ENCODE measurements at regions of chr15 and their contacts with region 1.

Region 1: GRCh38 chr15:38699633-38700230 is 135.1 kb upstream of the RASGRP1 start:
- DNase-seq: peak in 3 of 5 donors; percentile 56 to 75 (median 62)
- H3K4me3 ChIP-seq: no peak overlapping the region
- H3K27ac ChIP-seq: no peak overlapping the region
- H3K4me1 ChIP-seq: peaks cover 0 to 8% (median 4%) of the 10 kb centered on the region in 3 donors
- H3K27me3 ChIP-seq: no peaks in the 10 kb centered on the region
- CTCF ChIP-seq: peak; percentile 78

Region 2: GRCh38 chr15:39580117-39580484 is 880.4 kb after region 1 on chr15:
- intact Hi-C with region 1: loop called (anchors 10 kb)
- DNase-seq: peak; percentile 96 to 98 (median 96)
- H3K4me3 ChIP-seq: peak overlapping the region; percentile 73 to 89 (median 74)
- H3K27ac ChIP-seq: peak overlapping the region; percentile 88 to 91
- H3K4me1 ChIP-seq: peaks cover 2 to 26% (median 14%) of the 10 kb centered on the region in 3 donors
- H3K27me3 ChIP-seq: no peaks in the 10 kb centered on the region
- CTCF ChIP-seq: peak; percentile 90